ENCODE measurements at regions of chr7 and their contacts with region 1.

Region 1: GRCh38 chr7:140517546-140518369 is 38.5 kb upstream of the MKRN1 start:
- DNase-seq: peak; percentile 46 to 64 (median 55)
- H3K4me3 ChIP-seq: no peak overlapping the region
- H3K4me3 Mint-ChIP-seq: peak overlapping the region; percentile 32 to 80
- H3K27ac ChIP-seq: no peak overlapping the region
- H3K27ac Mint-ChIP-seq: no peak overlapping the region
- H3K4me1 ChIP-seq: peaks cover 0 to 2% of the 10 kb centered on the region in 2 donors
- H3K4me1 Mint-ChIP-seq: peaks cover 4% of the 10 kb centered on the region
- H3K27me3 ChIP-seq: no peaks in the 10 kb centered on the region
- H3K27me3 Mint-ChIP-seq: peaks cover 0 to 4% (median 3%) of the 10 kb centered on the region in 3 donors
- CTCF ChIP-seq: peak; percentile 81

Region 2: DNA sequence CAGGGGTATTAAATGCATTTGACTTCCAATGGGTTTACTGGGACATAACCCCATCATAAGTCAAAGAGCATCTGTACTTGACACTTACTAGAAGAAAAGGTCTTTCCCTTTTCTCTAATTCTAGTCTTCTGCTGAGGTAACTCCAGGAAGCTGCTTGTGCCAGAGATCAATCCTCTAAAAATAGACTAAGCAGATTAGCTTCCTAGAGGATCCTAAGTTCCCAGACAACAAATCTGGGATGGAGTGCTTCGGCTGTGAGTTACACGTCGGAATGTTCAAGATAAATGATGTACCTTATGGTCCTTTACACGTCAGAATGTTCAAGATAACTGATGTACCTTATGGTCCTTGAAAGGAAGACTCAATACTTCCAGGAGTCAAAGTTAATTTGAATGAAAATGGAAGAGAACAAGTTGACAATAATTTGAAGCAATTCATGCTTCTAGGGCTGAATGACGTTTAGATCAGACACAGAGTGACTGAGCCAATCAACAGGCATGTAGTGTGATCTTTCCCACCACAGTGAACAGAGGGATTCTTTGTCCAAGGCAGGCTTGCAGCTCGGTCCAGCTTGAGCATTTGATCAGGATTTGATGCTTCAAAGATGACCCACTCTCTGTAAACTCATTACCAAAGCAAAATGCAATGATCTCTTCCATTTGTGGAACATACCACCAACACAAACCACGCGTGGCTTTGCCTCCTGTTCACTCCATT is 183.3 kb before region 1 on chr7:
- intact Hi-C with region 1: no loop called
- DNase-seq: no peak
- H3K4me3 ChIP-seq: no peak overlapping the region
- H3K4me3 Mint-ChIP-seq: no peak overlapping the region
- H3K27ac ChIP-seq: no peak overlapping the region
- H3K27ac Mint-ChIP-seq: no peak overlapping the region
- H3K4me1 ChIP-seq: no peaks in the 10 kb centered on the region
- H3K4me1 Mint-ChIP-seq: peaks cover 4% of the 10 kb centered on the region
- H3K27me3 ChIP-seq: no peaks in the 10 kb centered on the region
- H3K27me3 Mint-ChIP-seq: peaks cover 0 to 18% (median 10%) of the 10 kb centered on the region in 3 donors
- CTCF ChIP-seq: no peak

Region 3: DNA sequence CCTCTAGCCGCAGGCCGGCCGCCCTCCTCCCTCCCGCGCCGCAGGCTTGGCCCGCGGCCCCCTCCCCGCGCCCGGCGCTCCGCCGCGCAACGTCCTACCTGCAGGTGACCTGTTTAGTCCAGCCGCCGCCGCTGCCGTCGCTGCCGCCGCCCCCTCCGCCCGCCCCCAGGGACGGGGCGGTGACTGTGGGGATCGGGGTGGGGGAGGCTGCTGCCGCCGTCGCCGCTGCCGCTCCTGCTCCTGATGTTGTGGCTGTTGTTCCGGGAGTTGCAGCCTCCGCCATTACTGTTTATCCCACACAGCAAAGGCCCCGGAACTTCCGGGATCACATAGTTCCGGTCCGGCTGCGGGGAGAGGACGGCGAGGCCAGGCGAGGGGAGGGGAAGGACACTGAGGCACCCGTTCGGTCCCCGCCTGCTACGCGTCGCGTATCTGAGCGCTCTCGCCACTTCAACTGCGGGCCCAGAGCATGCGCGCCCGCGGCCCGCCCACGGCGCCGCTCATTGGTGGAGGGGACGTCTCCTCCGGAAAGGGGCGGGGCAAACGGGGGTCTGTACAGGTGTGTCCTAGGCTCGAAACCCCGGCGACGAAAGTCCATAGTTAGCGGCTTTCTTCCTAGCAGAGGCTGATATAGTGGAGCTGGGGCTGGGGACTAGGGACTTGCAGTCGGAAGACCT is 38.6 kb before region 1 on chr7 and contains the start of gene MKRN1:
- intact Hi-C with region 1: no loop called
- DNase-seq: peak; percentile 86 to 92 (median 89)
- H3K4me3 ChIP-seq: peak within 1 kb of the TSS; percentile 94 to 99 (median 96)
- H3K4me3 Mint-ChIP-seq: peak within 1 kb of the TSS; percentile 97 to 99
- H3K27ac ChIP-seq: peak within 1 kb of the TSS; percentile 89 to 96
- H3K27ac Mint-ChIP-seq: peak within 1 kb of the TSS; percentile 91 to 98 (median 98)
- H3K4me1 ChIP-seq: peaks cover 22% of the 10 kb centered on the region in 2 donors
- H3K4me1 Mint-ChIP-seq: peaks cover 29% of the 10 kb centered on the region
- H3K27me3 ChIP-seq: no peaks in the 10 kb centered on the region
- H3K27me3 Mint-ChIP-seq: peaks cover 0 to 4% (median 0%) of the 10 kb centered on the region in 3 donors
- CTCF ChIP-seq: no peak
- polyA plus RNA-seq, gene MKRN1: 88.4 to 160 (median 127) TPM

Region 4: GRCh38 chr7:141533149-141533949 is 1015.6 kb after region 1 on chr7:
- intact Hi-C with region 1: loop called in 1 of 2 experiments (anchors 5 kb)
- DNase-seq: peak; percentile 25 to 60 (median 57)
- H3K4me3 ChIP-seq: no peak overlapping the region
- H3K4me3 Mint-ChIP-seq: no peak overlapping the region
- H3K27ac ChIP-seq: no peak overlapping the region
- H3K27ac Mint-ChIP-seq: no peak overlapping the region
- H3K4me1 ChIP-seq: no peaks in the 10 kb centered on the region
- H3K4me1 Mint-ChIP-seq: peaks cover 2% of the 10 kb centered on the region
- H3K27me3 ChIP-seq: peaks cover 0 to 6% of the 10 kb centered on the region in 2 donors
- H3K27me3 Mint-ChIP-seq: peaks cover 9 to 16% (median 14%) of the 10 kb centered on the region in 3 donors
- CTCF ChIP-seq: peak; percentile 94

Measured in CD14-positive monocyte (primary cell).